ENCODE measurements at regions of chr11 and their contacts with region 1.

Region 1: DNA sequence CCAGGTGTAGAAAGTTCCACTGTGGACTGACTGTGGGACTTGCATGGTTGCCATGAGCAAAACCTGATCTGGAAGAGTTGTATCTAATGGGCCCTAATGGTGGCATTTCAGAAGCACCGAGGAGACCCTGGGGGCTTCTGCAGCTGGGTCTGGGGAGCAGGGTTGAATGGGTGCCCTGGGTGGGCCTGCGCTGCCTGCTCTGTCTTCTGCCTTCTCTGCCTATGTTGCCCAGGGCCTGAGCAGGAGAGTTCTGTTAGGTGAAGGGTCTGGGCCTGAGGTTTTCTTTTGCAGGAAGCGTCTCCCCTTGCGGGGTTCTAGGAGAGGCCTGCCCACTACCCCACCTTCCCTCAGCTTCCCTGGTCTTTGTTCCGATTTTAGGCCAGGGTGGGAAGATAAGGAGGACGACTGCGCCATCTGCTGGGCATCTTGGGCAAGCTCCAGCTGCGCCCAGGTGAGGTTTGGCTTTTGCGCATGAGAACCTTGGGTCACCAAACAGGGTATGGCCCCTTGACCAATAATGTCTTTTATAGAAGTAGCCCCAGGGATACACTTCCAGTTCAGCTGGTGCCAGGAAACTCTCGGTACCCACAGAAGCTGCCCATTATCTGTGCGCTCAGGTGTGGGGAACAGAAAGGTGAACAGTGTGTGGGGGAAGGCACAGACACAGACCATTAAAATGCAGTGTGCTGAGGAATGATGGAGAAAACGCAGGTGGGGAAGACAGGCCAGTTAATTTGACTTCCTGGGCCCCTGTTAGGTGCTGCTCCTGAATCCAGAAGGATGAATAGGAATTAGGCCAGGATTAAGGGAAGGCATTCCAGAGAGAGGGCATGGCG is 23.2 kb downstream of the COMMD9 start:
- DNase-seq: peak; percentile 14 to 58 (median 35)
- ATAC-seq: peak; percentile 68
- H3K4me3 ChIP-seq: no peak overlapping the region
- H3K4me3 Mint-ChIP-seq: no peak overlapping the region
- H3K27ac ChIP-seq: no peak overlapping the region
- H3K27ac Mint-ChIP-seq: no peak overlapping the region
- H3K4me1 ChIP-seq: no peaks in the 10 kb centered on the region
- H3K4me1 Mint-ChIP-seq: no peaks in the 10 kb centered on the region
- H3K27me3 ChIP-seq: no peaks in the 10 kb centered on the region
- H3K27me3 Mint-ChIP-seq: peaks cover 0 to 20% (median 13%) of the 10 kb centered on the region in 5 donors

Region 2: GRCh38 chr11:35822815-35823495 is 443.1 kb before region 1 on chr11:
- CTCF ChIA-PET with region 1: interaction called, 4 read pairs
- POLR2A ChIA-PET with region 1: no interaction called
- intact Hi-C with region 1: loop called (anchors 1 to 5 kb)
- DNase-seq: no peak
- ATAC-seq: no peak
- H3K4me3 ChIP-seq: no peak overlapping the region
- H3K4me3 Mint-ChIP-seq: no peak overlapping the region
- H3K27ac ChIP-seq: no peak overlapping the region
- H3K27ac Mint-ChIP-seq: peak overlapping the region in 1 of 9 donors; percentile 46
- H3K4me1 ChIP-seq: peaks cover 0 to 6% of the 10 kb centered on the region in 2 donors
- H3K4me1 Mint-ChIP-seq: peaks cover 4 to 23% (median 17%) of the 10 kb centered on the region in 7 donors
- H3K27me3 ChIP-seq: no peaks in the 10 kb centered on the region
- H3K27me3 Mint-ChIP-seq: no peaks in the 10 kb centered on the region

Region 3: DNA sequence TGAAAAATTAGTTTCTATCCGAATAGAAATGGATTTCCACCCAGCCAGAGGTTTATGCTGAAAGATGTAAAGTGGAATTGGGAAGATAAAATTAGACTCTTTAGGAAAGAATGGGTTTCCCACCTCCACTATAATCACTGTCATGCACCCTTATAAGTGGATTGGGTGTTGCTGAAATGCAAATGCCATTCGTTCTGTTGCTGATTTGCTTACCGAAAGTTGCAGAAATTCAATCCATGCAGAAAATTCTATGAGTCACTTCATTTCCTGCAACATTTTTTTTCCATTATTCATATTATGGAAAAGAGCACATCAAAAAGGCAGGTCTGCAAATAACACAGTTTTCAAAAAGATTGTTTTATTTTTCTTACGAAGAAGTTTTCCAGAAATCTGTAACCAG is 256.5 kb before region 1 on chr11:
- CTCF ChIA-PET with region 1: no interaction called
- POLR2A ChIA-PET with region 1: no interaction called
- intact Hi-C with region 1: no loop called
- DNase-seq: no peak
- ATAC-seq: no peak
- H3K4me3 ChIP-seq: no peak overlapping the region
- H3K4me3 Mint-ChIP-seq: no peak overlapping the region
- H3K27ac ChIP-seq: no peak overlapping the region
- H3K27ac Mint-ChIP-seq: no peak overlapping the region
- H3K4me1 ChIP-seq: no peaks in the 10 kb centered on the region
- H3K4me1 Mint-ChIP-seq: no peaks in the 10 kb centered on the region
- H3K27me3 ChIP-seq: peaks cover 0 to 3% of the 10 kb centered on the region in 2 donors
- H3K27me3 Mint-ChIP-seq: peaks cover 6 to 31% (median 23%) of the 10 kb centered on the region in 5 donors

Region 4: DNA sequence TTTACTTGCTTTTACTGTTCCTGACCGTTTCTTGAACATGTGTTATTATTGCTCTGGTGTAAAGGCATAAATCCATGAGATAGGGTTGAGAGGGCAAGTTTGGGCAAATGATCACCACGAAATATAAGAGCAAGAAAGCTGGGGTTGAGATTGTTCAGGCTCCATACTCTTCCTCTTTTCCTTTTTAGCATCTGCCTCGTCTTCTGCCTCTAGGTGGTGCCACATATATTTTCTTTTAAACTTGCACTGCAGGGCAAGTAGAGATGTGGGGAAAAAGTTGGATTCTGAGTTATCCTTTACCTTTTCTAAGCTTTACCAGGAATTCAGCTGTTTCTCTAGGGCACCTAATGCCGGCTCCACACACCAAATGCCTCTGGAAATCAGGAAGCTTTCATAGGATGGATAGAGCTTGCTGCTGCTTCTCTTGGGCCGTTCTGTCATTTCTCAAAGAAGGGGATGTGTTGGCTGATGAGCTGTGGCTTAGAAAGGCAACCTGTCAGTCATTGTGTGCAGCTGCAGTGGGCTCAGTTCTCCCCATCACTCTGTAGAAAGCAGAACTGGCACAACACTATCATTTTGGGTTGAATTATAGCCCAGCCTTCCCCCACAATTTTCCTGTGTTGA is 223.9 kb before region 1 on chr11:
- CTCF ChIA-PET with region 1: no interaction called
- POLR2A ChIA-PET with region 1: no interaction called
- intact Hi-C with region 1: loop called (anchors 1 to 5 kb)
- DNase-seq: no peak
- ATAC-seq: no peak
- H3K4me3 ChIP-seq: no peak overlapping the region
- H3K4me3 Mint-ChIP-seq: no peak overlapping the region
- H3K27ac ChIP-seq: no peak overlapping the region
- H3K27ac Mint-ChIP-seq: no peak overlapping the region
- H3K4me1 ChIP-seq: no peaks in the 10 kb centered on the region
- H3K4me1 Mint-ChIP-seq: no peaks in the 10 kb centered on the region
- H3K27me3 ChIP-seq: no peaks in the 10 kb centered on the region
- H3K27me3 Mint-ChIP-seq: peaks cover 0 to 11% (median 9%) of the 10 kb centered on the region in 5 donors

Measured in naive thymus-derived CD4-positive, alpha-beta T cell (primary cell).